CD8-positive, alpha-beta T cell (primary cell): ENCODE measurements at regions of chrX and their contacts with region 1.

Region 1: GRCh38 chrX:13658602-13659001 is 5.7 kb downstream of the TCEANC start:
- DNase-seq: peak in 3 of 9 experiments; percentile 23 to 77 (median 63)
- ATAC-seq: peak; percentile 44
- H3K4me3 ChIP-seq: no peak overlapping the region
- H3K4me3 Mint-ChIP-seq: peak overlapping the region; percentile 18
- H3K27ac ChIP-seq: peak overlapping the region in 1 of 2 experiments; percentile 56
- H3K27ac Mint-ChIP-seq: peak overlapping the region; percentile 79
- H3K4me1 ChIP-seq: peaks cover 10% of the 10 kb centered on the region
- H3K4me1 Mint-ChIP-seq: peaks cover 30% of the 10 kb centered on the region
- H3K27me3 ChIP-seq: no peaks in the 10 kb centered on the region
- H3K27me3 Mint-ChIP-seq: no peaks in the 10 kb centered on the region
- CTCF ChIP-seq: peak; percentile 48

Region 2: GRCh38 chrX:13620207-13620606 is 38.4 kb before region 1 on chrX:
- CTCF ChIA-PET with region 1: no interaction called
- POLR2A ChIA-PET with region 1: no interaction called
- intact Hi-C with region 1: no loop called
- DNase-seq: no peak
- ATAC-seq: no peak
- H3K4me3 ChIP-seq: no peak overlapping the region
- H3K4me3 Mint-ChIP-seq: no peak overlapping the region
- H3K27ac ChIP-seq: no peak overlapping the region
- H3K27ac Mint-ChIP-seq: no peak overlapping the region
- H3K4me1 ChIP-seq: no peaks in the 10 kb centered on the region
- H3K4me1 Mint-ChIP-seq: no peaks in the 10 kb centered on the region
- H3K27me3 ChIP-seq: no peaks in the 10 kb centered on the region
- H3K27me3 Mint-ChIP-seq: no peaks in the 10 kb centered on the region
- CTCF ChIP-seq: no peak

Region 3: GRCh38 chrX:13638826-13639225 is 19.8 kb before region 1 on chrX:
- CTCF ChIA-PET with region 1: no interaction called
- POLR2A ChIA-PET with region 1: no interaction called
- intact Hi-C with region 1: no loop called
- DNase-seq: no peak
- ATAC-seq: no peak
- H3K4me3 ChIP-seq: no peak overlapping the region
- H3K4me3 Mint-ChIP-seq: no peak overlapping the region
- H3K27ac ChIP-seq: no peak overlapping the region
- H3K27ac Mint-ChIP-seq: no peak overlapping the region
- H3K4me1 ChIP-seq: no peaks in the 10 kb centered on the region
- H3K4me1 Mint-ChIP-seq: no peaks in the 10 kb centered on the region
- H3K27me3 ChIP-seq: no peaks in the 10 kb centered on the region
- H3K27me3 Mint-ChIP-seq: peaks cover 5% of the 10 kb centered on the region
- CTCF ChIP-seq: no peak

Region 4: DNA sequence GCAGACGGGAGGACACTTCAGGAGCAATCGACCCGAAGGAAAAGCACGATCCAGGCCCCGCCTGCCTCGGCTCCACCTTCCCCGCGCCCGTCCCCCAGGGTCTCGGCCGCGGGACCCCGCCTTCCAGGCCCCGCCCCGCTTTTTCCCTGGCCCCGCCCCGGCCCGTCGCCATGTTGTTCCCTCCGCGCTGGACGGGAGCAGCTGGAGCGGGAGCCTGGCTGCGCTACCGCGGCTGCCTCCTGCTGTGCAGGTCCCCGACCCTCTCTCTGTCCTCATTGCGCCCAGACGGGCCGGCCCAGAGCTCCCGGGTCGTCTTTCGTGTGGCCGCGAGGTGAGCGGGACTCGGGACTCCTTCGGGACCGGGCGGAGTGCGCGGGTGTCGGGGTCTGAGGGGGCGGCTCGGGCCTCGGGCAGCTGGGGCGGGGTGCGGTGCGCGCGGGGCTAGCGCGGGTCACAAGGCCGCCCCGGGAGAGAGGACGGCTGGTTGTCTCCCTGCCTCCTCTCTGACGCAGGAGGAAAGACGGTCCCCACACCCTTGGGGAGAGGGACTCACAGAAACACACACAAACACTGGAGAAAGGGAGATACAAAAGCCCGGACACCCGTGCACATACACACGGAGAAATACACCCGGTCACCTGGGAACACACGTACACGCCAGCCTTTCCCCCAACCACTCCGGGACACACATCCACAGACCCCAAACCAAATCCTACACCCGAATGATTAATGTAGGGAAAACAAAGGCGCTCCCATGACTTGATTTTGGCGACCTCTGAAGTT is 30.5 kb after region 1 on chrX and contains the start of gene RAB9A:
- CTCF ChIA-PET with region 1: no interaction called
- POLR2A ChIA-PET with region 1: interaction called, 4 read pairs
- intact Hi-C with region 1: loop called (anchors 1 to 2 kb)
- DNase-seq: peak; percentile 58 to 85 (median 78)
- ATAC-seq: peak; percentile 88
- H3K4me3 ChIP-seq: peak within 1 kb of the TSS; percentile 79 to 82
- H3K4me3 Mint-ChIP-seq: peak within 1 kb of the TSS; percentile 95
- H3K27ac ChIP-seq: peak within 1 kb of the TSS; percentile 80 to 90
- H3K27ac Mint-ChIP-seq: peak within 1 kb of the TSS; percentile 98
- H3K4me1 ChIP-seq: peaks cover 25% of the 10 kb centered on the region
- H3K4me1 Mint-ChIP-seq: peaks cover 60% of the 10 kb centered on the region
- H3K27me3 ChIP-seq: no peaks in the 10 kb centered on the region
- H3K27me3 Mint-ChIP-seq: no peaks in the 10 kb centered on the region
- CTCF ChIP-seq: no peak
- total RNA-seq, gene RAB9A: 19.4 to 21.5 TPM